Mammary epithelial cell (primary cell): ENCODE measurements at regions of chr3 and their contacts with region 1.

Region 1: GRCh38 chr3:115169808-115170207 is 22.7 kb upstream of the ZBTB20 start:
- DNase-seq: no peak
- H3K4me3 ChIP-seq: no peak overlapping the region
- H3K27ac ChIP-seq: no peak overlapping the region
- H3K4me1 ChIP-seq: no peaks in the 10 kb centered on the region
- H3K27me3 ChIP-seq: no peaks in the 10 kb centered on the region
- CTCF ChIP-seq: peak in 1 of 2 donors; percentile 5

Region 2: GRCh38 chr3:115040673-115041286 is 129.0 kb before region 1 on chr3:
- CTCF ChIA-PET with region 1: no interaction called
- dilution Hi-C with region 1: no loop called
- in situ Hi-C with region 1: no loop called
- intact Hi-C with region 1: loop called (anchors 1 kb)
- DNase-seq: peak; percentile 25
- H3K4me3 ChIP-seq: no peak overlapping the region
- H3K27ac ChIP-seq: no peak overlapping the region
- H3K4me1 ChIP-seq: no peaks in the 10 kb centered on the region
- H3K27me3 ChIP-seq: no peaks in the 10 kb centered on the region
- CTCF ChIP-seq: peak; percentile 72 to 78

Region 3: GRCh38 chr3:115052906-115053305 is 116.9 kb before region 1 on chr3:
- CTCF ChIA-PET with region 1: no interaction called
- dilution Hi-C with region 1: no loop called
- in situ Hi-C with region 1: no loop called
- intact Hi-C with region 1: no loop called
- DNase-seq: no peak
- H3K4me3 ChIP-seq: no peak overlapping the region
- H3K27ac ChIP-seq: no peak overlapping the region
- H3K4me1 ChIP-seq: no peaks in the 10 kb centered on the region
- H3K27me3 ChIP-seq: no peaks in the 10 kb centered on the region
- CTCF ChIP-seq: no peak

Region 4: GRCh38 chr3:115363071-115363470 is 193.3 kb after region 1 on chr3:
- CTCF ChIA-PET with region 1: no interaction called
- dilution Hi-C with region 1: no loop called
- in situ Hi-C with region 1: no loop called
- intact Hi-C with region 1: no loop called
- DNase-seq: peak; percentile 36
- H3K4me3 ChIP-seq: no peak overlapping the region
- H3K27ac ChIP-seq: no peak overlapping the region
- H3K4me1 ChIP-seq: no peaks in the 10 kb centered on the region
- H3K27me3 ChIP-seq: no peaks in the 10 kb centered on the region
- CTCF ChIP-seq: no peak